Heart right ventricle (tissue), 16 donors: ENCODE measurements at regions of chr1 and their contacts with region 1.

Region 1: DNA sequence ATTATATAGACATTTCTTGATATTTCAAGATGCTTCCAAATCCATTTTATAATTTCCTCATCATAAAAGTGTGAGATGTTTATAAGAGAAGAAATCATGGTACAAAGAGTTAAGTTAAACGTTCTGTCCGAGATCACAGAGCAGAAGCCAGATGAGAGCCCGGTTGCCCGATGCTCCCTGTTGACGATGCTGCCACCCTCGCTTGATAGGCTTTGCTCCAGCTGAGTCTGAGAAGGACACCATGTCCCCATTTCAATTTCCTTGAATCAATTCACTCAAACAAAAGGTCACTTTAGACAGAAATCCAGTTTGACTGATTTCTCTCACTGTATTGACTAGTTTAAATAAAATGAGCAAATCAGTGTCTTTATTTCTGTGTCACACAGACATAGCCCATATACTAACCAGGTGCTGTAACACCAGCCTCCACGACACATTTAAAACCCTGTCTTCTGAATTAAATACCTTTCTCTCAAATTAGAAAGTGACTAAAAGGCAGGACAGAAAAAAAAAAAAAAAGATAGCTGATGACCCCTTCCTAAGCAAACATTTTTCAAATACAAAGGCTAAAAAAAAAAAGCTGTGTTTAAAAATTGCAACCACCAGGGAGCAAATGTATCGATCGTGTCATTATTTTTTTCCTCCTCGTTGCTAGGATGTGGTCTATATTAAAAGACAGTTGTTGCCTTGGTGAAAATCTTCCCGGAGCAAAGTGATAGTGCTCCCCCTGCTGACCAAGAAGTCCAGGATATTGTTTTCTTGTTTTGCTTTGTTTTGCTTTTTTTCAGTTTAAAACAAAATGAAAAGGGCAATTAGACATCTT is 35.2 kb downstream of the DNASE2B start:
- DNase-seq: peak in 1 of 2 donors; percentile 53
- ATAC-seq: peak in 7 of 8 donors; percentile 63 to 85 (median 74)
- H3K4me3 ChIP-seq: peak overlapping the region in 8 of 10 donors; percentile 4 to 43 (median 34)
- H3K27ac ChIP-seq: peak overlapping the region in 1 of 10 donors; percentile 1
- H3K4me1 ChIP-seq: peaks cover 0 to 41% (median 6%) of the 10 kb centered on the region in 9 donors
- H3K27me3 ChIP-seq: no peaks in the 10 kb centered on the region
- CTCF ChIP-seq: peak; percentile 35 to 83 (median 79)

Region 2: DNA sequence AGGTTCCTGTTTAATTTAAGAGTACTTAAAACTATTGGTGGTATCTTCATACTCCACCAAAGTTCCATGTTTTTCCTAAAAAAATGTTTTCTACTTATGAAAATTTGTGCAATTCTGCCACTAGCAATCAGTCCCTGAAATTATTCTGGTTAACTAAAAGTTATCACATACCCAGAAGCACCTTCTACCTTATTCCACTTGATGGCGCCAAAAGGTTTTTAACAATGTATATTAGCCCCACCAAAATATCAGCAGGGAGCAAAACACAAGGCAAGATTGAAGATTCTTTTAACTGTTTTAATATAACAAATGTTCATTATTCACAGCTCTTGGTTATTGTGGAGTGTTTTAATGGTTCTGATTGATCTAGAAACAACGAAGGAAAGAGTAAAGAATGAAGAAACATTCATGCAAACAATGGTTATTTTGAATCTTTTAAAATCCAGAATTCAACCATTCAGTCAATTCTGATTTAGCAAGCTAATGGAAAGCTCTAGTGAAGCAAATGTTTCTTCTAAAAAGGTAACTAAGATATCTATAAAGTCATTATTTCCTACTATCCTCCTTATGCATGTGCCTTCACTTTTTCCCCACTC is 501.7 kb before region 1 on chr1:
- intact Hi-C with region 1: loop called in 8 of 10 experiments (anchors 2 to 10 kb)
- DNase-seq: peak in 1 of 2 donors; percentile 23
- ATAC-seq: peak in 7 of 8 donors; percentile 51 to 84 (median 71)
- H3K4me3 ChIP-seq: no peak overlapping the region
- H3K27ac ChIP-seq: no peak overlapping the region
- H3K4me1 ChIP-seq: no peaks in the 10 kb centered on the region
- H3K27me3 ChIP-seq: no peaks in the 10 kb centered on the region
- CTCF ChIP-seq: peak in 8 of 9 donors; percentile 59 to 82 (median 73)

Region 3: GRCh38 chr1:84143796-84144565 is 289.5 kb before region 1 on chr1 and contains the start of gene PRKACB:
- intact Hi-C with region 1: loop called in 9 of 10 experiments (anchors 1 to 10 kb)
- DNase-seq: no peak
- ATAC-seq: peak in 5 of 8 donors; percentile 28 to 58 (median 50)
- H3K4me3 ChIP-seq: peak within 1 kb of the TSS in 5 of 10 donors; percentile 6 to 50 (median 13)
- H3K27ac ChIP-seq: peak within 1 kb of the TSS in 1 of 10 donors; percentile 78
- H3K4me1 ChIP-seq: peaks cover 0 to 29% (median 0%) of the 10 kb centered on the region in 9 donors
- H3K27me3 ChIP-seq: no peaks in the 10 kb centered on the region
- CTCF ChIP-seq: no peak
- total RNA-seq, gene PRKACB: 28.4 to 49.1 (median 43.0) TPM

Region 4: DNA sequence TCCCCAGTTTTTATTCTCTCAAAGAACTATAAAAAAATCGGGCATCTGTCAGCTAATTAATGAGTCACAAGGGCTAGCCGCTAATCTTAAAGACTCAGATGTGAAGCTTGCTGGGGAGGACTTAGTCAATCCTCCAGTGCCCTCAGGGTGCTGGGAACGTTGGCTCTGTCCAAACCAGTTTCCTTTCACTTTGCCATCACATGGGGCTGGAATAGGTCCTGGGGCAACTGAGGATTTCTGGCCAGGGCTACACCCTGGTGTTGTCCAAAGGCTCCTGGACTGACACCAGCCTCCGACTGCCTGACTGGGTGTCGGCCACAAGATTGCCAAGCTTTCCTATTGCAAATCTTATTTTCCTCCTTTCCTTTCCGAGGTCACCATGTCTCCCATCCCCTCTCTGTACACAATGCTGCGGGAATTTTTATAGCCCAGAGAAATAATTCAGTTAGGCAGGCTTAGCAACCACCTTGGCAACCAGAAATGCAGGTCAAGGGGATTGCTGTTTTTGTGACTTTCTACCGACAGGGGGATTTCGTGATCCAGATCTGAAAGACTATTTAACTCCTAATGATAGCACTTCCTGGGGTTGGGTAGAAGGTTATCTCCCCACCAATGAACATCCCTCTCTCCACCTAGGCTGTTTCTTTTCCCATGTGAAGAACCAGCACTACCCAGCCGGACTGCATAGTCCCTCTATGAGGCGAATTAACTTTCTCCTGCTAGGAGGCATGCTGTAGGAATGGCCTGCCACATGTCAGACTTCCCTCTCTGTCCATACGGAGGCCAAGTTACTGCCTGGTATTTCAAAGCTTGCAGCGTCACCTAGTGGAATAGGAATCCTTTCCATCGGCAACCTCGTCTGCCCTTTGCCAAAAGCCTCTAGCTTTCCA is 170.7 kb after region 1 on chr1:
- intact Hi-C with region 1: loop called in 1 of 10 experiments (anchors 5 kb)
- DNase-seq: peak; percentile 23 to 76
- ATAC-seq: peak; percentile 79 to 94 (median 90)
- H3K4me3 ChIP-seq: peak overlapping the region in 8 of 10 donors; percentile 17 to 49 (median 44)
- H3K27ac ChIP-seq: peak overlapping the region in 9 of 10 donors; percentile 11 to 83 (median 66)
- H3K4me1 ChIP-seq: peaks cover 0 to 35% (median 21%) of the 10 kb centered on the region in 9 donors
- H3K27me3 ChIP-seq: no peaks in the 10 kb centered on the region
- CTCF ChIP-seq: peak; percentile 37 to 87 (median 74)

Region 5: GRCh38 chr1:84753516-84754385 is 320.3 kb after region 1 on chr1:
- intact Hi-C with region 1: loop called in 1 of 10 experiments (anchors 10 kb)
- DNase-seq: peak; percentile 24 to 62
- ATAC-seq: peak; percentile 71 to 93 (median 90)
- H3K4me3 ChIP-seq: no peak overlapping the region
- H3K27ac ChIP-seq: no peak overlapping the region
- H3K4me1 ChIP-seq: peaks cover 0 to 10% (median under 1%) of the 10 kb centered on the region in 9 donors
- H3K27me3 ChIP-seq: peaks cover 0 to 10% (median 0%) of the 10 kb centered on the region in 7 donors
- CTCF ChIP-seq: peak; percentile 72 to 96 (median 88)